Naive thymus-derived CD8-positive, alpha-beta T cell (primary cell): ENCODE measurements at regions of chr20 and their contacts with region 1.

Region 1: GRCh38 chr20:23420943-23421931 is at the start of gene NAPB:
- DNase-seq: peak; percentile 85 to 95 (median 91)
- ATAC-seq: peak; percentile 98 to 99
- H3K4me3 Mint-ChIP-seq: peak within 1 kb of the TSS; percentile 83 to 93 (median 89)
- H3K27ac Mint-ChIP-seq: peak within 1 kb of the TSS; percentile 14 to 90 (median 86)
- H3K4me1 Mint-ChIP-seq: peaks cover 10 to 60% (median 30%) of the 10 kb centered on the region in 4 donors
- H3K27me3 Mint-ChIP-seq: peaks cover 0 to 10% (median 8%) of the 10 kb centered on the region in 5 donors
- polyA plus RNA-seq, gene NAPB: 3.4 to 7.2 (median 5.8) TPM

Region 2: GRCh38 chr20:23350196-23350903 is 70.9 kb before region 1 on chr20 and contains the start of gene NXT1:
- POLR2A ChIA-PET with region 1: interaction called, 48 read pairs
- DNase-seq: peak; percentile 88 to 98 (median 96)
- ATAC-seq: peak; percentile 80 to 83
- H3K4me3 Mint-ChIP-seq: peak within 1 kb of the TSS; percentile 94 to 100 (median 99)
- H3K27ac Mint-ChIP-seq: peak within 1 kb of the TSS; percentile 99 to 100 (median 100)
- H3K4me1 Mint-ChIP-seq: peaks cover 16 to 35% (median 32%) of the 10 kb centered on the region in 4 donors
- H3K27me3 Mint-ChIP-seq: no peaks in the 10 kb centered on the region
- polyA plus RNA-seq, gene NXT1: 60.3 to 65.1 (median 60.3) TPM

Region 3: GRCh38 chr20:23357767-23358591 is 63.3 kb before region 1 on chr20:
- POLR2A ChIA-PET with region 1: interaction called, 14 read pairs
- DNase-seq: peak; percentile 96 to 100 (median 100)
- ATAC-seq: peak; percentile 72 to 75
- H3K4me3 Mint-ChIP-seq: peak overlapping the region; percentile 89 to 96 (median 94)
- H3K27ac Mint-ChIP-seq: peak overlapping the region; percentile 85 to 99 (median 98)
- H3K4me1 Mint-ChIP-seq: peaks cover 8 to 46% (median 28%) of the 10 kb centered on the region in 4 donors
- H3K27me3 Mint-ChIP-seq: peaks cover 0 to 1% (median 0%) of the 10 kb centered on the region in 5 donors